MCF 10A (cell line): ENCODE measurements at regions of chr1 and their contacts with region 1.

Region 1: GRCh38 chr1:117284399-117285215 is 73.9 kb upstream of the VTCN1 start:
- DNase-seq: peak; percentile 73
- H3K4me3 Mint-ChIP-seq: no peak overlapping the region
- H3K27ac Mint-ChIP-seq: no peak overlapping the region
- H3K4me1 Mint-ChIP-seq: no peaks in the 10 kb centered on the region
- H3K27me3 Mint-ChIP-seq: no peaks in the 10 kb centered on the region
- CTCF ChIP-seq: peak; percentile 71

Region 2: GRCh38 chr1:117077267-117077666 is 207.3 kb before region 1 on chr1:
- CTCF ChIA-PET with region 1: interaction called, 20 read pairs
- POLR2A ChIA-PET with region 1: interaction called, 6 read pairs
- intact Hi-C with region 1: no loop called
- DNase-seq: peak; percentile 87
- H3K4me3 Mint-ChIP-seq: no peak overlapping the region
- H3K27ac Mint-ChIP-seq: peak overlapping the region; percentile 80
- H3K4me1 Mint-ChIP-seq: peaks cover 10% of the 10 kb centered on the region
- H3K27me3 Mint-ChIP-seq: no peaks in the 10 kb centered on the region
- CTCF ChIP-seq: no peak

Region 3: GRCh38 chr1:117121776-117122697 is 162.6 kb before region 1 on chr1:
- CTCF ChIA-PET with region 1: interaction called, 65 read pairs
- POLR2A ChIA-PET with region 1: interaction called, 3 read pairs
- intact Hi-C with region 1: loop called (anchors 1 kb)
- DNase-seq: peak; percentile 95
- H3K4me3 Mint-ChIP-seq: peak overlapping the region; percentile 84
- H3K27ac Mint-ChIP-seq: peak overlapping the region; percentile 86
- H3K4me1 Mint-ChIP-seq: no peaks in the 10 kb centered on the region
- H3K27me3 Mint-ChIP-seq: no peaks in the 10 kb centered on the region
- CTCF ChIP-seq: peak; percentile 37

Region 4: GRCh38 chr1:117146570-117147346 is 137.8 kb before region 1 on chr1:
- CTCF ChIA-PET with region 1: interaction called, 5 read pairs
- POLR2A ChIA-PET with region 1: no interaction called
- intact Hi-C with region 1: loop called (anchors 5 kb)
- DNase-seq: peak; percentile 80
- H3K4me3 Mint-ChIP-seq: no peak overlapping the region
- H3K27ac Mint-ChIP-seq: peak overlapping the region; percentile 63
- H3K4me1 Mint-ChIP-seq: peaks cover 29% of the 10 kb centered on the region
- H3K27me3 Mint-ChIP-seq: no peaks in the 10 kb centered on the region
- CTCF ChIP-seq: no peak

Region 5: DNA sequence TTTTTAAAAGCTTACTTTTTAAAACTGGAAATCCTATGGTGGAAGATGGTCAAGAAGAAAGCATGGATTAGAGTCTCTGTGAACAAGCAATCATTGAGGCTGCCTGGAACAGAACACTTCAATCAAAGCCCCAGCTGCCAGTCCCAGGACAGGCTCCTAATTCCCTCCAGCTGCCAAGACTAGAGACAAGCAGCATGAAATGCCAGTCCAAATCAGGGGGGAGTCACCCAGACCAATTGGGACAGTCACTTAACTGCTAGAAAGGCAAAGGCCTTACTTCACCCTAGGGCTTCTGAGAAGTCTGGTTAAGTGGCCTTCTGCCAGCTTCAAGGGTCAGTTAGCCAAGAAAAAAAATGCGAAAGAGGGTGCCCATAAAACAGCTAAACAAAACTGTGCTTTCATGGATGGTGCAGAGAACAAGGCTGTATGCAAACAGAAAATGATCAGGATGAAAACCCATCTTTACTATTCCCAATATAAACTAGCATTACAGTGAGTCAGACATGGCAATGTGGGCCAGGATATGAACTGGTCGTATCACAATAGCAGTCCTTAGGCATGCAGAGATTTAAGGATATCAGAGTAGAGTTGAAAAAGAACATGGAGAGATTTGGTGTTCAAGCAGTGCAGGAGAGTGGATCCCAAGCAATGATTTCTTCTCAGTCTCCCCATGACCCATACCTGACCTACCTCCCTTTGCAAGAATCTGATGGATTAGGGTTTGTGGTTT is 51.6 kb after region 1 on chr1:
- CTCF ChIA-PET with region 1: no interaction called
- POLR2A ChIA-PET with region 1: no interaction called
- intact Hi-C with region 1: no loop called
- DNase-seq: no peak
- H3K4me3 Mint-ChIP-seq: no peak overlapping the region
- H3K27ac Mint-ChIP-seq: no peak overlapping the region
- H3K4me1 Mint-ChIP-seq: no peaks in the 10 kb centered on the region
- H3K27me3 Mint-ChIP-seq: no peaks in the 10 kb centered on the region
- CTCF ChIP-seq: no peak

Region 6: DNA sequence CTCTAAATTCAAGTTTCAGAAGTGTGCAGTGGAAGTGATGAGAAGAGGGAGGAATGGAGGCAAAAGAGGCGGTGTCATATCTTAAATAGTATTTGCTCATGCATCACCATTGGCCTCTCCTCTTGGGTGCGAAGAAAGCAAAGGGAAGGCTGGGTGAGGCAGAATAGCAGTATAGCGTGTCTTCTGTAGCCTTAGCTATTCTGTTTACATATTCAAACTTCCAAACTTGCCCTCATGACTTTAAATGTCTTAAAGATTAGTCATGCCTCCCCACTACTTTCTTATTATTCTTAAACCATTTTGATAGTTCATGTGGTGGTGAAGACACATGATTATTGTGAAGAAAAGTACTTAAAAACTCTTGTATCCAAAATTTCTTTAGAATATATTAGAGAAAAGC is 216.7 kb after region 1 on chr1:
- CTCF ChIA-PET with region 1: no interaction called
- POLR2A ChIA-PET with region 1: no interaction called
- intact Hi-C with region 1: no loop called
- DNase-seq: no peak
- H3K4me3 Mint-ChIP-seq: no peak overlapping the region
- H3K27ac Mint-ChIP-seq: no peak overlapping the region
- H3K4me1 Mint-ChIP-seq: no peaks in the 10 kb centered on the region
- H3K27me3 Mint-ChIP-seq: no peaks in the 10 kb centered on the region
- CTCF ChIP-seq: no peak